Dendritic cell treated with granulocyte-macrophage colony-stimulating factor and Interleukin-4, amounts not matched to agents 40 ng/mL and 50 ng/mL, for 4 days (primary cell): ENCODE measurements at regions of chr3 and their contacts with region 1.

Region 1: DNA sequence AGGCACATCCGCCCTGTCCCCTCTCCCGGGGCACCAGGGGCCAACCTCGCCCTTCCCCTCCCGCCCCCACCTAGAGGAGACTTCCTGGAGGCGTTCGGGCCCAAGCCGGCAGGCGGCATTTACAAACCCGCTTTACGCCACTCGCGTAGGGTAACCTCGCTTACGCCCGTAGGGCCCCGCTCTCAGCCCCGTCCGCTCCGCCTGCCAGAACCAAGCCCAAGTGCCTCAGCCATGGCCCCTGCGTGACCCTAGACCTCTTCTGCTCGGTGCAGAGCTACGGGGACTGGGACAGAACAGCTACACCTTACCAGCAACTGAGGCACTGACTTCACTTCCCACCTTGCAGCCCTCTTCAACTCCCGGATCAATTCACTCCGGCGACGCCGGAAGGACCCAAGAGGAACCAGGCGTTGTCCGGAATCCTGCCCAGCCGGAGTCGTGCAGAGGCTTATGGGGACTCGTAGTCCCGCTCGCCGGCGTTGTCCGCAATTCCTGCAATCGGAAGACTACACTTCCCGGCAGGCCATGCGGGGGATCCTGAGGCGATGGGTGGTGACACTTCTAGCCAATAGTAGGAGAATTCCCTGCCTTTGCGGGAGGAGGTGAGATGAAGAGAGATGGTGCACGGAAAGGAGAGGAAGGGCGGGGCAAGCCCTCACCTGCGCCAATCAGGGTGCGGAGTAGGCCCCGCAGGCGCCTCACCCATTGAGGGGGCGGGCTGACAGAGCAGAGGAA is at the start of gene PDCD10:
- H3K4me3 Mint-ChIP-seq: no peak within 1 kb of the TSS
- H3K27ac Mint-ChIP-seq: no peak within 1 kb of the TSS
- H3K4me1 Mint-ChIP-seq: peaks cover 13% of the 10 kb centered on the region
- H3K27me3 Mint-ChIP-seq: no peaks in the 10 kb centered on the region

Region 2: DNA sequence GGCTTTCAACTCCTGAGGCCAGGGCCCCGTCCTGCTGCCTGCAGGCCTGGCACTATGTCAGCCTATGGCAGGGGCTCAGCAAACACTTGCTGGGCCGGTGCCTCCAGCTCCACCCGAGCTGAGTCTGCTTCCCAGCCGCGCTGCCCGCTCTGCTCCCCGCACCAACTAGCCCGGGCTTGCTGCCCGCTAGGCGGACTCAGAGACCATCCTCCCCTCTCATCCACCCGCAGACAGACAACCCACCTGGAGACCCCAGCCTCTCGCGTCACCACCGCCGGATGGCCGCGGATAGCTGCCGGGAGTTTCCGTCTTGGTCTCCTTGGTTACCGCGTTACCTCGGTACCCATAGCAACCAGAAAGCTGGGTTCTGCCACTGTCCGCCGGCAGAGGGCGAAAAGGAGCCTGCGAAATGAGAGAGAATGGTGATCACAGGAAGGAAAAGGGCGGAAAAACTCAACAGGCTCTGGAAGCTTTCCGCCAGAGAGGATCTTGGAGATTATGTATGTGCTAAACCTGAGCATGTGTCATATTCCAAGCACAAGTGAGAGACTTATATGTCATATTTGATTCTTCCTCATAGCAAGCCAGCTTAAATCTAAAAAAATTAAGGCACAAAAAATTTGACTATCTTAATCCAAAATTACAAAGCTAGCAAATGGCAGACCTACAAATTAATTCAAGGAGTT is 354.5 kb before region 1 on chr3 and contains the start of gene ZBBX:
- intact Hi-C with region 1: loop called (anchors 2 kb)
- H3K4me3 Mint-ChIP-seq: peak within 1 kb of the TSS; percentile 78
- H3K27ac Mint-ChIP-seq: peak within 1 kb of the TSS; percentile 28
- H3K4me1 Mint-ChIP-seq: peaks cover 11% of the 10 kb centered on the region
- H3K27me3 Mint-ChIP-seq: peaks cover 10% of the 10 kb centered on the region

Region 3: GRCh38 chr3:167861649-167862048 is 127.0 kb after region 1 on chr3:
- intact Hi-C with region 1: loop called (anchors 5 kb)
- H3K4me3 Mint-ChIP-seq: peak overlapping the region; percentile 30
- H3K27ac Mint-ChIP-seq: peak overlapping the region; percentile 78
- H3K4me1 Mint-ChIP-seq: peaks cover 60% of the 10 kb centered on the region
- H3K27me3 Mint-ChIP-seq: peaks cover 12% of the 10 kb centered on the region

Region 4: GRCh38 chr3:167882067-167882667 is 147.5 kb after region 1 on chr3:
- intact Hi-C with region 1: loop called (anchors 2 kb)
- H3K4me3 Mint-ChIP-seq: no peak overlapping the region
- H3K27ac Mint-ChIP-seq: no peak overlapping the region
- H3K4me1 Mint-ChIP-seq: peaks cover 4% of the 10 kb centered on the region
- H3K27me3 Mint-ChIP-seq: peaks cover 3% of the 10 kb centered on the region

Region 5: DNA sequence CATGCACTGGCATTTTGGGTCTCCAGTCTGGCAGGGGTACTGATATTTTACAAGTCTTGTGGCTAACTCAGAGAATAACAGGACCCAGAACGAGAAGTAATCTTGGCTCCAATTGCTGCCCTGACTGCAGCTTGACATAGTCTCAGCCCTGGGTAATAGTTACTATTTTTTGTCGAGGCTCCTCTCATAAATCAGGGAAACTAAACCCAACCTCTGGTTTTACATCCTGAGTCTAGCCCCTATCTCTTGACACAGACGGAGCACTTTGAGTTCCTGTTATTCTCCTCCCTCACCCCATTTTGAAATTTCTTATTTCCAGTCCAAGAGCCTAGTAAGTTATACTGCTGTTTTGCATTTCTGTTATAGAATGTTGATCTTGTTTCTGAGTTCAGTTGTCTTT is 637.2 kb after region 1 on chr3:
- intact Hi-C with region 1: no loop called
- H3K4me3 Mint-ChIP-seq: no peak overlapping the region
- H3K27ac Mint-ChIP-seq: no peak overlapping the region
- H3K4me1 Mint-ChIP-seq: no peaks in the 10 kb centered on the region
- H3K27me3 Mint-ChIP-seq: no peaks in the 10 kb centered on the region